Tibial artery (tissue), 4 donors: ENCODE measurements at regions of chr6 and their contacts with region 1.

Region 1: GRCh38 chr6:160955508-160955907 is 36.1 kb upstream of the MAP3K4 start:
- DNase-seq: no peak
- H3K4me3 ChIP-seq: no peak overlapping the region
- H3K27ac ChIP-seq: no peak overlapping the region
- H3K4me1 ChIP-seq: peaks cover 0 to 6% (median 3%) of the 10 kb centered on the region in 4 donors
- H3K27me3 ChIP-seq: no peaks in the 10 kb centered on the region
- CTCF ChIP-seq: no peak

Region 2: GRCh38 chr6:160919723-160920440 is 35.6 kb before region 1 on chr6:
- intact Hi-C with region 1: no loop called
- DNase-seq: no peak
- H3K4me3 ChIP-seq: no peak overlapping the region
- H3K27ac ChIP-seq: peak overlapping the region; percentile 19 to 56
- H3K4me1 ChIP-seq: peaks cover 0 to 12% (median 4%) of the 10 kb centered on the region in 4 donors
- H3K27me3 ChIP-seq: no peaks in the 10 kb centered on the region
- CTCF ChIP-seq: no peak

Region 3: GRCh38 chr6:161009991-161010390 is 54.5 kb after region 1 on chr6:
- intact Hi-C with region 1: loop called (anchors 2 kb)
- DNase-seq: no peak
- H3K4me3 ChIP-seq: no peak overlapping the region
- H3K27ac ChIP-seq: no peak overlapping the region
- H3K4me1 ChIP-seq: peaks cover 0 to 42% (median 26%) of the 10 kb centered on the region in 4 donors
- H3K27me3 ChIP-seq: no peaks in the 10 kb centered on the region
- CTCF ChIP-seq: no peak